CD8-positive, alpha-beta T cell (primary cell): ENCODE measurements at regions of chrX and their contacts with region 1.

Region 1: GRCh38 chrX:124217304-124218251 is 114.9 kb upstream of the TEX13D start:
- DNase-seq: peak; percentile 19 to 83 (median 64)
- ATAC-seq: peak; percentile 94
- H3K4me3 ChIP-seq: peak overlapping the region in 1 of 2 experiments; percentile 18
- H3K4me3 Mint-ChIP-seq: peak overlapping the region; percentile 63
- H3K27ac ChIP-seq: peak overlapping the region; percentile 27 to 80
- H3K27ac Mint-ChIP-seq: peak overlapping the region; percentile 93
- H3K4me1 ChIP-seq: peaks cover 52% of the 10 kb centered on the region
- H3K4me1 Mint-ChIP-seq: peaks cover 74% of the 10 kb centered on the region
- H3K27me3 ChIP-seq: no peaks in the 10 kb centered on the region
- H3K27me3 Mint-ChIP-seq: no peaks in the 10 kb centered on the region
- CTCF ChIP-seq: no peak

Region 2: DNA sequence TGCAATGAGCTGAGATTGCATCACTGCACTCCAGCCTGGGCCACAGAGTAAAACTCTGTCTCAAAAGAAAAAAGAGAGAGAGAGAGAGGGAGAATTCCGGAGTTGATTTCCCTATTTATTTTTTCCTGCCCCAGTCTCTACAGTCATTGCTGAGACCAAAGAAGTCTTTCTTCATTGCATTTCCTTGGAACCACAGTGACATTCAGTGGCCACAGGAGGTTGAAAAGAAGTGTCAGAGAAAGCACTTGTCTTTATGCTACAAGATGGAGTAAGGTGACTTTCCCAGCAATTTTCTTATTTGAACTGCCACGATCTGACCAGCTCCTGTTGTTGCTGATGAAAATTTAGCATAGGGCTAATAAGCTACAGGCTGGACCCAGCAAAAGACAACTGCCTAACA is 672.6 kb before region 1 on chrX:
- CTCF ChIA-PET with region 1: no interaction called
- POLR2A ChIA-PET with region 1: no interaction called
- intact Hi-C with region 1: no loop called
- DNase-seq: no peak
- ATAC-seq: no peak
- H3K4me3 ChIP-seq: no peak overlapping the region
- H3K4me3 Mint-ChIP-seq: no peak overlapping the region
- H3K27ac ChIP-seq: no peak overlapping the region
- H3K27ac Mint-ChIP-seq: no peak overlapping the region
- H3K4me1 ChIP-seq: no peaks in the 10 kb centered on the region
- H3K4me1 Mint-ChIP-seq: no peaks in the 10 kb centered on the region
- H3K27me3 ChIP-seq: no peaks in the 10 kb centered on the region
- H3K27me3 Mint-ChIP-seq: no peaks in the 10 kb centered on the region
- CTCF ChIP-seq: no peak

Region 3: GRCh38 chrX:124256216-124256615 is 38.6 kb after region 1 on chrX:
- CTCF ChIA-PET with region 1: no interaction called
- POLR2A ChIA-PET with region 1: no interaction called
- intact Hi-C with region 1: loop called in 1 of 2 experiments (anchors 5 kb)
- DNase-seq: no peak
- ATAC-seq: no peak
- H3K4me3 ChIP-seq: no peak overlapping the region
- H3K4me3 Mint-ChIP-seq: no peak overlapping the region
- H3K27ac ChIP-seq: no peak overlapping the region
- H3K27ac Mint-ChIP-seq: no peak overlapping the region
- H3K4me1 ChIP-seq: no peaks in the 10 kb centered on the region
- H3K4me1 Mint-ChIP-seq: peaks cover 4% of the 10 kb centered on the region
- H3K27me3 ChIP-seq: no peaks in the 10 kb centered on the region
- H3K27me3 Mint-ChIP-seq: no peaks in the 10 kb centered on the region
- CTCF ChIP-seq: no peak

Region 4: DNA sequence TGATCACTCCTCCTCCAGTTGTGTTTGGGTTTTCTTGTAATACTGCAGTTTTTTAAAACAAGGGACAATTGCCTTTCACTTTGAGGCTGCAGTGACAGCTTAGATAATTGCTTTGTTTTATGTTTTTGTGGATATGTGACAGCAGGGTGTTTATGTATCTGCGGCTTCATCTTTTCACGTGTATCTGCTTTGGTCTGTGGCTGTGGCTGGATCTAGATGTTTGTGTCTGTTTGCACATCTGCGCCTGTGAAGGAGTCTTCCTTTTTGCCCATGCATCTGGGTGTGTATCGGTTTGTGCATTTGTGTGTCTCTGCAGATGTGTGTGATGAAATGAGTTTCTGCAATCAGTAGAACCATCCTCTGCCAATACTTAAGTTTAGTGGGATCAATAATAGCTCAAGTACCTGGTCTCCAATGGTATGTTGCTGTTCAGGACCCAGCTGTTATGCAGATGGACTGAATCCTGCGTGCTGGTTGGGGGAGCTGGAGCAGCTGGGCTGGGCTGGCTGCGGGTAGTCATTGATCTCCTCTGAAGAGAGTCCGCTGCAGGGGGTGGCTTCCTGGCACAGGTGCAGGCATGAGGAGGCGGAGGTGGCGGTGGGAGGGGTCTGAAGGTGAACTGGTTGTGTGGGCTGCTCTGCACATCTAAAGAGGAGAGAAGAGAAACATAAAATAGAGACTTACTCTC is 519.1 kb after region 1 on chrX:
- CTCF ChIA-PET with region 1: no interaction called
- POLR2A ChIA-PET with region 1: no interaction called
- intact Hi-C with region 1: loop called in 1 of 2 experiments (anchors 2 kb)
- DNase-seq: peak; percentile 18 to 79 (median 65)
- ATAC-seq: peak; percentile 88
- H3K4me3 ChIP-seq: peak overlapping the region in 1 of 2 experiments; percentile 20
- H3K4me3 Mint-ChIP-seq: peak overlapping the region; percentile 73
- H3K27ac ChIP-seq: peak overlapping the region in 1 of 2 experiments; percentile 26
- H3K27ac Mint-ChIP-seq: peak overlapping the region; percentile 91
- H3K4me1 ChIP-seq: peaks cover 22% of the 10 kb centered on the region
- H3K4me1 Mint-ChIP-seq: peaks cover 52% of the 10 kb centered on the region
- H3K27me3 ChIP-seq: no peaks in the 10 kb centered on the region
- H3K27me3 Mint-ChIP-seq: no peaks in the 10 kb centered on the region
- CTCF ChIP-seq: no peak